Caco-2 (cell line): ENCODE measurements at regions of chr1 and their contacts with region 1.

Region 1: DNA sequence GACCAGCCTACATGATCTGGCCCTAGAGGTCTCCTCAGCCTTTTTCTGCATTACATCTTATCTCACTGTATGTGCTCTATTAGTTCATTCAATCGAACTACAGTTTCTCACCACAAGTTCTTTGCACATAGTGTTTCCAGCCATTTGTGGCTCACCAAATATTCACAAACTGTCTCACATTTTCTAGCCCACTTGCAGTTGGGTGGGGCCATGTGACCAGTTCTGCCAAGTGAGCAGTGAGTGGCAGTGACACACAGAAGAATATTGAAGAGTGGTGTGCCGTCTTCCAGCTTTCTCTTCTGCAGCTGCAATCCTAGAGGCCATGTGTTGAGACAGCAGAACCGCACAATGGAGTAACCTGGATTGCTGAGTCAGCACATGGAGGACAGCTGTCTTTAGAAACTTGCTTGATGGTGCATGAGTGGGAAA is 103.2 kb upstream of the ZNF644 start:
- DNase-seq: no peak
- H3K4me3 ChIP-seq: no peak overlapping the region
- H3K4me3 Mint-ChIP-seq: no peak overlapping the region
- H3K27ac Mint-ChIP-seq: no peak overlapping the region
- H3K4me1 ChIP-seq: peaks cover 12% of the 10 kb centered on the region
- H3K4me1 Mint-ChIP-seq: peaks cover 10% of the 10 kb centered on the region
- H3K27me3 ChIP-seq: no peaks in the 10 kb centered on the region
- H3K27me3 Mint-ChIP-seq: no peaks in the 10 kb centered on the region
- CTCF ChIP-seq: no peak

Region 2: DNA sequence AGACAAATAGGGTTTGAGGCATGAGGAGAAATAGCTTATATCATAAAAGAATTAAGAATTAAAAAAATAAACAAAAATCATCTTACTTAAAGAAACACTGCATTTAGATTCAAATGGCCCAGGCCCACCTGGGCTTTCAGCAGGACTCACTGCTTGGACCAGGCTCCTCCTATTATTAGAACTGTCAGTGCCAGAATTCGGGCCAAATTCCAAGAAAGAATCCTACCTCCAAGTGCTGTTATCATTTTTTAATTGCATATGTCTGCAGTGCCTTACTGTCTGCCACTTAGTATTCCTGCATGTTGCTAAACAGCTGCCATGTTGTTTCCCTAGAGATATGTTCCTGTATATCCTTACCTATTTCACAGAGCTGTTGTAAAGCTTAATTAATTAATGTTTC is 519.9 kb before region 1 on chr1:
- CTCF ChIA-PET with region 1: no interaction called
- POLR2A ChIA-PET with region 1: no interaction called
- intact Hi-C with region 1: no loop called
- DNase-seq: no peak
- H3K4me3 ChIP-seq: no peak overlapping the region
- H3K4me3 Mint-ChIP-seq: no peak overlapping the region
- H3K27ac Mint-ChIP-seq: no peak overlapping the region
- H3K4me1 ChIP-seq: no peaks in the 10 kb centered on the region
- H3K4me1 Mint-ChIP-seq: no peaks in the 10 kb centered on the region
- H3K27me3 ChIP-seq: no peaks in the 10 kb centered on the region
- H3K27me3 Mint-ChIP-seq: no peaks in the 10 kb centered on the region
- CTCF ChIP-seq: no peak

Region 3: GRCh38 chr1:91021686-91022517 is 103.1 kb before region 1 on chr1 and contains the start of gene ZNF644:
- CTCF ChIA-PET with region 1: no interaction called
- POLR2A ChIA-PET with region 1: interaction called, 6 read pairs
- intact Hi-C with region 1: loop called (anchors 1 kb)
- DNase-seq: peak; percentile 85 to 88
- H3K4me3 ChIP-seq: peak within 1 kb of the TSS; percentile 69
- H3K4me3 Mint-ChIP-seq: peak within 1 kb of the TSS; percentile 85
- H3K27ac Mint-ChIP-seq: peak within 1 kb of the TSS; percentile 99
- H3K4me1 ChIP-seq: peaks cover 13% of the 10 kb centered on the region; the same call in 1 of the 2 replicates
- H3K4me1 Mint-ChIP-seq: no peaks in the 10 kb centered on the region
- H3K27me3 ChIP-seq: no peaks in the 10 kb centered on the region
- H3K27me3 Mint-ChIP-seq: no peaks in the 10 kb centered on the region
- CTCF ChIP-seq: no peak
- total RNA-seq, gene ZNF644: 32.5 and 35.9 TPM in 2 replicates

Region 4: GRCh38 chr1:91036894-91037829 is 87.8 kb before region 1 on chr1:
- CTCF ChIA-PET with region 1: no interaction called
- POLR2A ChIA-PET with region 1: no interaction called
- intact Hi-C with region 1: no loop called
- DNase-seq: peak in 1 of 2 experiments; percentile 17
- H3K4me3 ChIP-seq: no peak overlapping the region
- H3K4me3 Mint-ChIP-seq: no peak overlapping the region
- H3K27ac Mint-ChIP-seq: no peak overlapping the region
- H3K4me1 ChIP-seq: 0 out of 2 replicates have a peak, but pooled peaks cover 6% of the 10 kb centered on the region
- H3K4me1 Mint-ChIP-seq: peaks cover 20% of the 10 kb centered on the region
- H3K27me3 ChIP-seq: no peaks in the 10 kb centered on the region
- H3K27me3 Mint-ChIP-seq: no peaks in the 10 kb centered on the region
- CTCF ChIP-seq: no peak

Region 5: GRCh38 chr1:91080650-91081049 is 44.4 kb before region 1 on chr1:
- CTCF ChIA-PET with region 1: no interaction called
- POLR2A ChIA-PET with region 1: no interaction called
- intact Hi-C with region 1: loop called (anchors 5 kb)
- DNase-seq: no peak
- H3K4me3 ChIP-seq: no peak overlapping the region
- H3K4me3 Mint-ChIP-seq: no peak overlapping the region
- H3K27ac Mint-ChIP-seq: no peak overlapping the region
- H3K4me1 ChIP-seq: no peaks in the 10 kb centered on the region
- H3K4me1 Mint-ChIP-seq: no peaks in the 10 kb centered on the region
- H3K27me3 ChIP-seq: no peaks in the 10 kb centered on the region
- H3K27me3 Mint-ChIP-seq: no peaks in the 10 kb centered on the region
- CTCF ChIP-seq: no peak

Region 6: DNA sequence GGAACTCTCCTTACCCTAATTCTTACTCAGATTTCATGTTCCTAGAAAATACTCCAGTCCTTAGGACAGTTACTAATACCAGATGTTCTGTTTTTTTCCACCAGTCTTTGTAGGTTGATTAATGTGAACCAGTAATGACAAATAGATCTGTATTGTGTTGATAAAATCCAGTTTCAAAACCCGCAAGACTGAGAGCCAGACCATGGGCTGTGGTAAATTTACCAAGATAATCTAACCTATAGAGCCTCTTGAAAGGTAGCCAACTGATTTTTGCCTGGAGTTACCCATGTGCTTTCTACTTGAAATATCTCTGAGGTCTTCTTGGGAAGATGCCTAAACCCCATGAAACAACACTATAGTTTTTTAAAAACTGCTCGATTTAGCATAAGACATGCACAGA is 329.1 kb after region 1 on chr1:
- CTCF ChIA-PET with region 1: no interaction called
- POLR2A ChIA-PET with region 1: no interaction called
- intact Hi-C with region 1: no loop called
- DNase-seq: no peak
- H3K4me3 ChIP-seq: no peak overlapping the region
- H3K4me3 Mint-ChIP-seq: no peak overlapping the region
- H3K27ac Mint-ChIP-seq: no peak overlapping the region
- H3K4me1 ChIP-seq: no peaks in the 10 kb centered on the region
- H3K4me1 Mint-ChIP-seq: no peaks in the 10 kb centered on the region
- H3K27me3 ChIP-seq: no peaks in the 10 kb centered on the region
- H3K27me3 Mint-ChIP-seq: no peaks in the 10 kb centered on the region
- CTCF ChIP-seq: no peak